ENCODE measurements at regions of chr2 and their contacts with region 1.

Region 1: GRCh38 chr2:54455563-54456361 is at the start of gene SPTBN1:
- DNase-seq: peak; percentile 80 to 82
- ATAC-seq: peak; percentile 63 to 69
- H3K4me3 ChIP-seq: peak within 1 kb of the TSS; percentile 68 to 86 (median 81)
- H3K27ac ChIP-seq: peak within 1 kb of the TSS; percentile 89 to 94 (median 91)
- H3K4me1 ChIP-seq: peaks cover 31 to 37% of the 10 kb centered on the region in 2 donors
- H3K27me3 ChIP-seq: no peaks in the 10 kb centered on the region
- CTCF ChIP-seq: no peak
- POLR2A ChIP-seq: peak; percentile 43 to 66
- total RNA-seq, gene SPTBN1: 107 to 191 (median 119) TPM

Region 2: DNA sequence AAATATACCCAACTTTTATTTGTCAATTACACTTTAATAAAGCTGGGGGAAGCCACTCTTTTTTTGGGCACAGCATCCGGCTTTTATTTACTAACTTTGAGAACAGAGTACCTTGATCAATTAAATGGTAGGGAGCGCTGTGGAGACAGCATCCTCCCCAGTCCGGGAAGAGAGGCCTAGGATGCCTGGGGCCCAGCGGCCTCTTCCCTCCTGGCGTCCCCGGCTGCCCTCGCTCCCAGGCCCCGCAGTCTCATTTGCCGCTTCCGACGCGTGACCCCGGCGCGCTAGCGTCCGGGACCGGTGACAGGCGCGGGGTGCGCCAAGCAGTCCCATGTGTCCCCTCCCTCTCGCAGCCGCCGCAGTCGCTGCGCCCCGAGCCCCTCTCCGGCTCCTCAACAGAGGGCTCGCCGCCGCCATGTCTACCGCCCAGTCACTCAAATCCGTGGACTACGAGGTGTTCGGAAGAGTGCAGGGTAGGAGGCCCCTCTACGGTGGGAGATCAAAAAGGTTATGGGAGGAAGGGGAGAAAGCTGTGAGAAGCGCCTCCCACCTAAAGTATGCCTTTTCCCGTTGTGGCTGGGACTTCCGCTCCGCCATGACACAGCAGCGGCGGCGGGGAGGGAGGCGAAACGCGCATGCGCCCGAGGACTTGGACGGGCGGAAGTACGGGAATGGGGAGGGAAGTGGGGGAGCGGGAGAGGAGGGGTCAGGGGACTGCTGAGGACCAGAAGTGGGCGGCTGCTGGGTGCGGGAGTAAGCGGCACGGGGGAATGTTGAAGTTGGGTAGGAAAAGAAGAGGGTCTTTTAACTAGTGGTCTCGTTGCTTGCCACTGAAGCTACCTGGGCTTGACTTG is 340.3 kb before region 1 on chr2 and contains the start of gene ACYP2:
- in situ Hi-C with region 1: no loop called
- intact Hi-C with region 1: loop called (anchors 10 kb)
- DNase-seq: peak; percentile 94 to 95
- ATAC-seq: peak; percentile 96 to 98
- H3K4me3 ChIP-seq: peak within 1 kb of the TSS; percentile 70 to 89 (median 76)
- H3K27ac ChIP-seq: peak within 1 kb of the TSS; percentile 97 to 99 (median 98)
- H3K4me1 ChIP-seq: peaks cover 10 to 16% of the 10 kb centered on the region in 2 donors
- H3K27me3 ChIP-seq: no peaks in the 10 kb centered on the region
- CTCF ChIP-seq: no peak
- POLR2A ChIP-seq: peak; percentile 83 to 85
- total RNA-seq, gene ACYP2: 52.9 to 121 (median 107) TPM

Region 3: GRCh38 chr2:54330162-54330925 is 125.4 kb before region 1 on chr2:
- in situ Hi-C with region 1: no loop called
- intact Hi-C with region 1: loop called (anchors 1 kb)
- DNase-seq: peak; percentile 88 to 92
- ATAC-seq: peak; percentile 95 to 97
- H3K4me3 ChIP-seq: peak overlapping the region; percentile 68 to 82 (median 78)
- H3K27ac ChIP-seq: peak overlapping the region; percentile 88 to 92 (median 90)
- H3K4me1 ChIP-seq: peaks cover 12% of the 10 kb centered on the region in 2 donors
- H3K27me3 ChIP-seq: no peaks in the 10 kb centered on the region
- CTCF ChIP-seq: no peak
- POLR2A ChIP-seq: peak; percentile 91 to 95

Region 4: GRCh38 chr2:54341656-54342055 is 114.1 kb before region 1 on chr2:
- in situ Hi-C with region 1: no loop called
- intact Hi-C with region 1: no loop called
- DNase-seq: no peak
- ATAC-seq: no peak
- H3K4me3 ChIP-seq: no peak overlapping the region
- H3K27ac ChIP-seq: no peak overlapping the region
- H3K4me1 ChIP-seq: no peaks in the 10 kb centered on the region
- H3K27me3 ChIP-seq: no peaks in the 10 kb centered on the region
- CTCF ChIP-seq: no peak
- POLR2A ChIP-seq: no peak

Region 5: DNA sequence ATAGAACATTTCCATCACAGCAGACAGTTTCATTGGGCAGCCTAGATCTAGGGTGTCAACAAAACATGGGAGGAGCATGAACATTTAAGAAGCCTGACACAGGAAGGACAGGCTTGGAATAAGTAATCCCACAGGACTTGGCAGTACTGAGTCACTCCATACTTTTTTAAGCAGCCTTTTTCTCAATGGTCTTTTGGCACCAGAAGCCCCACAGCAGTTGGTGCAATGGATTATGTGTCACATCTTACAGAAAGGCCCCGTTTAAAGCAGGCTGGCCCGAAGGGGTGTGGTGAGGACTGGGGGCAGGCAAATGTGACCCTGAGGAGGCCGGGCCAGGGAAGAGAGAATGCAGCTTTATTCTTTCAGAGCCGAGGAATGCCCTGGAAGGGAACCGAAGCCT is 27.0 kb after region 1 on chr2:
- in situ Hi-C with region 1: no loop called
- intact Hi-C with region 1: loop called (anchors 2 kb)
- DNase-seq: peak in 1 of 2 donors; percentile 65
- ATAC-seq: peak; percentile 70 to 88
- H3K4me3 ChIP-seq: peak overlapping the region in 1 of 4 donors; percentile 23
- H3K27ac ChIP-seq: peak overlapping the region; percentile 47 to 78 (median 76)
- H3K4me1 ChIP-seq: peaks cover 43 to 61% of the 10 kb centered on the region in 2 donors
- H3K27me3 ChIP-seq: no peaks in the 10 kb centered on the region
- CTCF ChIP-seq: no peak
- POLR2A ChIP-seq: no peak

Region 6: DNA sequence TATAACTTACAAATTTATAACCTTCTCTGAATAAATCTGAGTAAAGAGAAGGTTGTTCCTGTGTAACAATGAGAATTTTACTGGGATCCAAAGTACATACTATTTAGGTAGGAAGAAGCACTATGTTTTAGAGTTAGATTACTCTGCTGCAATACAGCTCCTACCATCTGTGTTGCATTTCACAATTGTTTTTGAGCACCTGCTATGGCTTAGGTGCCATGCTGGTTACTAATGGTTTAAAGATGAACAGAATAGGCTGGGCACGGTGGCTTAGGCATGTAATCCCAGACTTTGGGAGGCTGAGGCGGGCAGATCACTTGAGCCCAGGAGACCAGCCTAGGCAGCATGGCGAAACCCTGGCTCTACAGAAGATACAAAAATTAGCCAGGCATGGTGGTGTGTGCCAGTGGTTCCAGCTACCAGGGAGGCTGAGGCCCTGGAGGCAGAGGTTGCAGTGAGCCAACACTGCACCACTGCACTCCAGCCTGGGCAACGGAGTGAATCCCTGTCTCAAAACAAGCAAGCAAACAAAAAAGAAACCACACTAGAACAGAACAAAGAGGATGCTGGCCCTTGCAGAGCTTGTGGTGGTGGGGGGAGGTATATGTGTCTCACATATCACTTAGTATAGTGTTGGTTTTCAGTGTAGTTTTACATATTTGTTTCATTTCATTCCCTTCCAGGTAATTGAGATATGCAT is 57.1 kb after region 1 on chr2:
- in situ Hi-C with region 1: no loop called
- intact Hi-C with region 1: loop called (anchors 2 kb)
- DNase-seq: peak; percentile 23 to 47
- ATAC-seq: peak; percentile 92 to 93
- H3K4me3 ChIP-seq: no peak overlapping the region
- H3K27ac ChIP-seq: peak overlapping the region in 2 of 4 donors; percentile 2 to 54
- H3K4me1 ChIP-seq: peaks cover 6 to 54% of the 10 kb centered on the region in 2 donors
- H3K27me3 ChIP-seq: no peaks in the 10 kb centered on the region
- CTCF ChIP-seq: no peak
- POLR2A ChIP-seq: no peak